Tibial artery (tissue), 4 donors: ENCODE measurements at regions of chr20 and their contacts with region 1.

Region 1: GRCh38 chr20:25065625-25066338 is 7.8 kb upstream of the ACSS1 start:
- DNase-seq: peak; percentile 58 to 77
- H3K4me3 ChIP-seq: no peak overlapping the region
- H3K27ac ChIP-seq: no peak overlapping the region
- H3K4me1 ChIP-seq: peaks cover 0 to 4% (median 0%) of the 10 kb centered on the region in 4 donors
- H3K27me3 ChIP-seq: peaks cover 0 to 27% of the 10 kb centered on the region in 2 donors
- CTCF ChIP-seq: peak; percentile 81 to 95

Region 2: DNA sequence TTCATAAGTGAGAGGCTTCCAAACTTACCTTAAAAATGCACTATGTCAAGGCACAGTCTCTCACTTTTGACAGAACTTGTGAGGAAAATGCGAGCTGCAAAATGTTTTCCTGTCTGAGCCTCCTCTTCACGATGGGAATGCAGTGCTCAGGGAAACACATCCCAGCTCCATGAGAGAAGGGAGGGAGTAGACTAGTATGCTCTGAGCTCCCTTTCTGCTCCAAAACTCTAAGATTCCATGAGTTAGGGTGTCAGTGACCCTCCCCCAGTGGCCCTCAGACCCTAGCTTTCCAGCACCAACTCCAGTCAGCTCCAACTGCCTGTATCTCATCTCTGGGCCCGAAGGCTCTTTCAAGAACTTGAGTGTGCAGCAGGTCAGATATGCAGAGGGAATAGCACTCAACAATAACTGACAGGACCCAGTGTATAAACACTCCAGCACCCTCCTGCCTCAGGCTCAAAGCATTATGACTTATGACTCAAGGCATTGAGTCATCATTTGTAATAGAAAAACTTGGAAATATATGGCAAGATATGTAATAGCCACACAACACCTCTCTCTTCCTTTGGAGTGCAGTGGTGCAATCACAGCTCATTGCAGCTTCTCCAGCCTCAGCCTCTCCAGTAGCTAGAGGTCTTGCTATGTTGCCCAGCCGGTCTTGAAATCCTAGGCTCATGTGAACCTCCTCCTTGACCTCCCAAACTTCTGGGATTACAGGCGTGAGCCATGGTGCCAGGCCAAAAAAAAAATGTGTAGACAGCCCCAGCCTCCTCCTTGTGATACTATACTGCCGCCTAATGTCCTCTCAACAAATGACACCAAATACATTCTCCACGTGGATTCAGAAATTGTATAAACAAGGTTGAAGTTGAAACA is 113.0 kb after region 1 on chr20:
- intact Hi-C with region 1: loop called (anchors 2 kb)
- DNase-seq: peak; percentile 71
- H3K4me3 ChIP-seq: no peak overlapping the region
- H3K27ac ChIP-seq: peak overlapping the region; percentile 43 to 44
- H3K4me1 ChIP-seq: peaks cover 0 to 10% (median 6%) of the 10 kb centered on the region in 4 donors
- H3K27me3 ChIP-seq: no peaks in the 10 kb centered on the region
- CTCF ChIP-seq: peak; percentile 71 to 72

Region 3: DNA sequence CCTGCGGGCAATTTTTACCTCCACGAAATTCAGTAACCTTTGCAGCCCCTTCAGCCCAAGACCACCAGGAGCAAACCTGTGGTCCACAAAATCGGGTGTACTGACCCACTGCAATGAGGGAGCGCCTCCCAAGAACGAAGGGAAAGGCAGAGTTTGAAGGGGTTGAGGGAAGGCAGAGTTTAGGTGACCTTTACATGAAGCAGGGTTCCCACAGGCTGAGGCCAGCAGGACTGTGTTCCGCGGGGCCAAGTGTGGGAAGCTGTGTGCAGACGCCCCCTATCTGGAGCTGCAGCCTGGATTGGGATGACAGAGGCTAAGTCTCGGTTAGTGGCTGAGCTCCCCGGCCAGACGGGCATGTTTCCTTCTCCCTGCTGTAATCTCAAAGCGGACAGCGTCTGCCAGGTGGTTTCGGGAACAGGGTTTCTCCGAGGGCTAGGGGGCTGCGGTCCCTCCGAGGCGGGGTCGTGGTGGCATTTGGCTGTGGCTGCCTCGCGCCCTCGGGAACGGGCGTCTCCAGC is 181.3 kb after region 1 on chr20:
- intact Hi-C with region 1: no loop called
- DNase-seq: peak; percentile 82 to 86
- H3K4me3 ChIP-seq: peak overlapping the region; percentile 81 to 92
- H3K27ac ChIP-seq: peak overlapping the region; percentile 98 to 99
- H3K4me1 ChIP-seq: peaks cover 0 to 37% (median 30%) of the 10 kb centered on the region in 4 donors
- H3K27me3 ChIP-seq: no peaks in the 10 kb centered on the region
- CTCF ChIP-seq: peak in 1 of 2 experiments; percentile 54

Region 4: GRCh38 chr20:25390538-25391528 is 325.1 kb after region 1 on chr20 and contains the start of gene ABHD12:
- intact Hi-C with region 1: loop called (anchors 10 kb)
- DNase-seq: peak; percentile 96 to 98
- H3K4me3 ChIP-seq: peak within 1 kb of the TSS; percentile 64 to 85
- H3K27ac ChIP-seq: peak within 1 kb of the TSS; percentile 78 to 80
- H3K4me1 ChIP-seq: peaks cover 0 to 12% (median 8%) of the 10 kb centered on the region in 4 donors
- H3K27me3 ChIP-seq: no peaks in the 10 kb centered on the region
- CTCF ChIP-seq: no peak

Region 5: GRCh38 chr20:25486377-25486776 is 420.6 kb after region 1 on chr20:
- intact Hi-C with region 1: no loop called
- DNase-seq: no peak
- H3K4me3 ChIP-seq: no peak overlapping the region
- H3K27ac ChIP-seq: no peak overlapping the region
- H3K4me1 ChIP-seq: no peaks in the 10 kb centered on the region
- H3K27me3 ChIP-seq: no peaks in the 10 kb centered on the region
- CTCF ChIP-seq: no peak